ENCODE measurements at regions of chr5 and their contacts with region 1.

Region 1: GRCh38 chr5:180126726-180127681 is 55.4 kb upstream of the RNF130 start:
- DNase-seq: peak; percentile 64 to 65
- H3K4me3 ChIP-seq: peak overlapping the region; percentile 20 to 36 (median 31)
- H3K27ac ChIP-seq: peak overlapping the region; percentile 69 to 79 (median 79)
- H3K4me1 ChIP-seq: peaks cover 20 to 24% of the 10 kb centered on the region in 2 donors
- H3K27me3 ChIP-seq: no peaks in the 10 kb centered on the region
- CTCF ChIP-seq: peak; percentile 73 to 95 (median 94)
- POLR2A ChIP-seq: peak in 1 of 2 donors; percentile 3

Region 2: DNA sequence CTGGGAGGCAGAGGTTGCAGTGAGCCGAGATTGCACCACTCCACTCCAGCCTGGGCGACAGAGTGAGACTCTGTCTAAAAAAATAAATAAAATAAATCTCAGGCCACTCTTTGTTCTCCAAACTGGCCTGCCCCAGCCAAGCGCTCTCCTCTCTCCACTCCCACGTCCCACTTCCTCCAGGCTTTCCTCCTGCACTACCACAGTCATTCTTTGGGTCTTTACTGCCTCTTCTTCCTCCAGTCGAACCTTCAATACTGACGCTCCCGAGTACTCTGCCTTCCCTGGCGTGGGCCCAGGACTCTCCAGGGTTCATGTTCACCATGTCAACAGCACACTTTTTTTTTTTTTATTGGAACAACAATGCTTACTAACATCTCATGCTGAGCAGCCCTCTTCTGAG is 79.3 kb before region 1 on chr5:
- intact Hi-C with region 1: no loop called
- DNase-seq: peak; percentile 93
- H3K4me3 ChIP-seq: no peak overlapping the region
- H3K27ac ChIP-seq: peak overlapping the region; percentile 18 to 45 (median 36)
- H3K4me1 ChIP-seq: peaks cover 21 to 27% of the 10 kb centered on the region in 2 donors
- H3K27me3 ChIP-seq: no peaks in the 10 kb centered on the region
- CTCF ChIP-seq: no peak
- POLR2A ChIP-seq: no peak

Region 3: DNA sequence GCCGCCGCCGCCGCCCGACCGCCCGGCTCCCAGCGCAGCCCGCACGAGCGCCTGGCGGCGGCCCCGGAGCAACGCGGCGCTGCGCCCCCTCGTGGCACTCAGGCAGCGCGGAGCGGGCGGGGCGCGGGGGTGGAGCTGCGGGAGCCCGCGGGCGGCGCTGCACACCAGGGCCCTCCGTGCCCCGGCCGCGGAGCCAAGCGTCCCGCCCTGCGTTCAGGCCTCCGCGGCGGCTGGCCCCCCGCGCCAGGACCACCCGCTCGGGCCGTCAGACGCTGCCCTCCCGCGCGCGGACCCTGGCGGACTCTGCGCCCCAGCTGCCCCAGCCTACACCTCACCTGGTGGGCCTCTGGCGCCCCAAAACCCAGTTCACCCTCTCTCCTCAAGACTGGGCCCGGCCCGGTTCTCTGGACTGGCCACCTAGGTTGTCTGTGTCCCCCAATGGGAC is 82.2 kb after region 1 on chr5 and contains the start of gene RASGEF1C:
- intact Hi-C with region 1: loop called (anchors 5 kb)
- DNase-seq: peak; percentile 70 to 76
- H3K4me3 ChIP-seq: peak within 1 kb of the TSS in 1 of 3 donors; percentile 7
- H3K27ac ChIP-seq: no peak within 1 kb of the TSS
- H3K4me1 ChIP-seq: peaks cover 10 to 11% of the 10 kb centered on the region in 2 donors
- H3K27me3 ChIP-seq: no peaks in the 10 kb centered on the region
- CTCF ChIP-seq: peak in 3 of 6 experiments; percentile 63 to 73 (median 73)
- POLR2A ChIP-seq: no peak
- total RNA-seq, gene RASGEF1C: 0.58 to 4.0 (median 2.1) TPM

Measured in thyroid gland (tissue), 4 donors.